Stomach (tissue), 19 donors: ENCODE measurements at regions of chr16 and their contacts with region 1.

Region 1: DNA sequence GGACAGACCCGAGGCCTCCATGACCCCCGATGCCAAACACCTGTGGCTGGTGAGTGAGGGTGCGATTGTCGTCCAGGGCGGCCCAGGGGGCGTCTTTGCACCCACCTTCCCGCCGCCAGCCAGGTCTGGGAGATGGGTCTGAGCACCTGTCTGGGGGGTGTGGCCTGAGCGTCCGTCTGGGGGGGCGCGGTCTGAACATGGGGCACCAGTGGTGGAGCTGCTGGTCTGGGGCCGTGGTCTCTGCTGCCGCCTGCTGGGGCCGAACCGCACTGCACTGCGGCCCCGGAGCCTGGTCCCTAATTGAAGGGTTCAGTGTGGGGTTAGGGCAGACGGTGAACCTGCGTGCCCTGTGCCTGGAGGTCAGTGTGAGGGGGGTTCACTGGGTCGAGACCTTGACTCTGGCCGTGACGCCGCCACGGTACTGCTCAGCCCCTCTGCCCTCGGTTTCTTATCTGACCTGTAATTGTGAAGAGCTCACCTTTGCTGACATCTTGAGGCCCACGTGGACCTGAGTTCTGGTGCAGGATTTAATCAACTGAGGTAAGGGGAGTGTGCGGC is 12.6 kb upstream of the TCF25 start:
- DNase-seq: peak; percentile 70 to 85
- H3K4me3 ChIP-seq: no peak overlapping the region
- H3K27ac ChIP-seq: no peak overlapping the region
- H3K4me1 ChIP-seq: peaks cover 0 to 30% (median 11%) of the 10 kb centered on the region in 4 donors
- H3K27me3 ChIP-seq: no peaks in the 10 kb centered on the region
- CTCF ChIP-seq: peak in 5 of 7 experiments; percentile 89 to 99 (median 95)
- EP300 ChIP-seq: no peak
- POLR2A ChIP-seq: no peak

Region 2: GRCh38 chr16:89670496-89671431 is 190.1 kb before region 1 on chr16:
- intact Hi-C with region 1: no loop called
- DNase-seq: no peak
- H3K4me3 ChIP-seq: no peak overlapping the region
- H3K27ac ChIP-seq: no peak overlapping the region
- H3K4me1 ChIP-seq: no peaks in the 10 kb centered on the region
- H3K27me3 ChIP-seq: no peaks in the 10 kb centered on the region
- CTCF ChIP-seq: no peak
- EP300 ChIP-seq: no peak
- POLR2A ChIP-seq: no peak

Region 3: DNA sequence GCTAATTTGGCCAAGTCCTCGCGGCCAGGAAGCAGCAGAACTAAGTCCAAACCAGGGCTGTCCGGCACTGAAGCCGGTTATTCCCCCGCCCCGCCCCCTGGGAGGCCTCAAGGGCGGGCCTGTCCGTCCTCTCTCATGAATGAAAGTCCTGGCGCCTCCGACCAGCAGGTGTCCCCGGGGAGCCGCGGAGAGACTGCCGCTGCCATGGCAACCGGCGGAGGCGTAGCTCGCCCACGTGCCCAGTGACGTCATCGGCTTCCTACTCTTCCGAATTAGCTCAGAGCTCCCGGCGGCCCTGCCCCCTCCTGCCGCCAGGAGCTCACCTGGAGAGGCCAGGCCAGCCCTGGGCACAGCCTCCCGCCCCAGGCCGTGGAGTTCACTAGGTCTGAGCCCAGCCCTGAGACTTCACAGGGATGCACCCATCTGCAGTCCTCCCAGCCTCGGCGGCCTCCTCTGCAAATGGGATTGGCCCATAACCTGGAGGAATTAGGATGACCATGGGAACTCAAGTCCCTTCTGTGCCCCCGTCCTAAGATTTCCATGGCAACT is 160.7 kb before region 1 on chr16:
- intact Hi-C with region 1: loop called (anchors 10 kb)
- DNase-seq: peak; percentile 99 to 100
- H3K4me3 ChIP-seq: peak overlapping the region; percentile 70 to 80 (median 74)
- H3K27ac ChIP-seq: peak overlapping the region; percentile 89 to 99 (median 94)
- H3K4me1 ChIP-seq: peaks cover 28 to 56% (median 41%) of the 10 kb centered on the region in 4 donors
- H3K27me3 ChIP-seq: peaks cover 0 to 29% (median 0%) of the 10 kb centered on the region in 3 donors
- CTCF ChIP-seq: peak in 6 of 7 experiments; percentile 43 to 91 (median 76)
- EP300 ChIP-seq: no peak
- POLR2A ChIP-seq: no peak

Region 4: GRCh38 chr16:89737341-89738071 is 123.3 kb before region 1 on chr16:
- intact Hi-C with region 1: no loop called
- DNase-seq: no peak
- H3K4me3 ChIP-seq: no peak overlapping the region
- H3K27ac ChIP-seq: no peak overlapping the region
- H3K4me1 ChIP-seq: no peaks in the 10 kb centered on the region
- H3K27me3 ChIP-seq: no peaks in the 10 kb centered on the region
- CTCF ChIP-seq: no peak
- EP300 ChIP-seq: no peak
- POLR2A ChIP-seq: no peak

Region 5: DNA sequence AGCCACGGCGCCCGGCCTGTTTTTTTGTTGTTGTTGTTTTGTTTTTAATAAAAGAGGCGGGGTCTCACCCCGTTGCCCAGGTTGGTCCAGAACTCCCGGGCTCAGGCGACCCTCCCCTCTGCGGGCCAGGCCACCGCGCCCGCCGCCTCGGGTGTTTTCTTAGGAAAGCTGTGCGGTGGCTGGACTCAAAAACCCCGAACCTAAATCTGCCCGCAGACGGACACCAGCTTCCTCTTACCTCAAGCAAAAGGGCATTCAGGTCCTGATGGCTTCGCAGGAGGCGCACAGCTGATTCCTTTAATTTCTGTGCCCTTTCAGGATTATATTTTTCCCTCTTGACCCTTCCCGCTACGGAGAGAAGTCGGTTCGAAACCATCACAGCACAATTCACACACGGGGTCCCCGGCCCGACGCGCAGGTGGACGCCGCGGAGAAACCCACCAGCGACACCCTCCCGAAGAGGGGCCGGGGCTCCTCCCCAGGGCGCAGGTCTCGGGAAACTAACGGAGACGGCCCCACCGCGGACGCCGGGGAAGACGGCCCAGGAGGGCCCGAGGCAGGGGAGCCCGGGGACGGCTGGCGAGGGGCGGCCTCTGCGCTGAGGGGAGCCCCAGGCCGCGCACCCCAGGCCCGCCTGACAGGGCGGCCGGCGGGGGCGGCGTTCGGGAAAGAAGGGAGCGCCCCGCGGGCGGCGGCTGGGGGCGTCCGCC is 45.0 kb before region 1 on chr16:
- intact Hi-C with region 1: loop called (anchors 5 kb)
- DNase-seq: no peak
- H3K4me3 ChIP-seq: peak overlapping the region; percentile 54 to 82 (median 70)
- H3K27ac ChIP-seq: peak overlapping the region in 2 of 5 donors; percentile 88 to 95
- H3K4me1 ChIP-seq: peaks cover 8 to 35% (median 31%) of the 10 kb centered on the region in 4 donors
- H3K27me3 ChIP-seq: peaks cover 0 to 13% (median 0%) of the 10 kb centered on the region in 3 donors
- CTCF ChIP-seq: no peak
- EP300 ChIP-seq: no peak
- POLR2A ChIP-seq: no peak

Region 6: DNA sequence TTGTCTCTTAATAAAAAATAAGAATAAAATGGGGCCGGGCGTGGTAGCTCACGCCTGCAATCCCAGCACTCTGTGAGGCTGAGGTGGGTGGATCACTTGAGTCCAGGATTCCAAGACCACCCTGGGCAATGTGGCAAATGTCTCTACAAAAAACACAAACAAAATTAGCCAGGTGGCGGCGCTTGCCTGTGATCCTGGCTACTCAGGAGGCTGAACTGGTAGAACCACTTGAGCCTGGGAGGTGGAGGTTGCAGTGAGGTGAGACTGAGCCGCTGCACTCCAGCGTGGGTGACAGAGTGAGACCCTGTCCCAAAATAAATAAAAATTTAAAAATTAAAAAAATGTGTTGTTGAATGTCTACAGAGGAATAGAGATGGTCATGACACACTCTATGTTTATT is 84.8 kb after region 1 on chr16:
- intact Hi-C with region 1: no loop called
- DNase-seq: peak in 1 of 2 donors; percentile 62
- H3K4me3 ChIP-seq: no peak overlapping the region
- H3K27ac ChIP-seq: no peak overlapping the region
- H3K4me1 ChIP-seq: peaks cover 18 to 26% (median 23%) of the 10 kb centered on the region in 4 donors
- H3K27me3 ChIP-seq: peaks cover 0 to 42% (median 0%) of the 10 kb centered on the region in 3 donors
- CTCF ChIP-seq: no peak
- EP300 ChIP-seq: no peak
- POLR2A ChIP-seq: no peak